Left ventricle myocardium inferior (tissue), 1 donor: ENCODE measurements at regions of chr19 and their contacts with region 1.

Region 1: GRCh38 chr19:49817964-49818648 is at the start of gene MED25:
- DNase-seq: peak; percentile 86
- H3K4me3 ChIP-seq: peak within 1 kb of the TSS; percentile 86
- H3K27ac ChIP-seq: peak within 1 kb of the TSS; percentile 92
- H3K4me1 ChIP-seq: peaks cover 53% of the 10 kb centered on the region
- H3K27me3 ChIP-seq: no peaks in the 10 kb centered on the region
- CTCF ChIP-seq: peak; percentile 66
- total RNA-seq, gene MED25: 65.8 TPM

Region 2: GRCh38 chr19:49869441-49870176 is 51.5 kb after region 1 on chr19:
- intact Hi-C with region 1: loop called (anchors 5 kb)
- DNase-seq: peak; percentile 94
- H3K4me3 ChIP-seq: peak overlapping the region; percentile 72
- H3K27ac ChIP-seq: peak overlapping the region; percentile 90
- H3K4me1 ChIP-seq: peaks cover 67% of the 10 kb centered on the region
- H3K27me3 ChIP-seq: no peaks in the 10 kb centered on the region
- CTCF ChIP-seq: peak; percentile 29